ENCODE measurements at regions of chr2 and their contacts with region 1.

Region 1: GRCh38 chr2:138501425-138502283 is at the start of gene SPOPL:
- H3K4me3 Mint-ChIP-seq: peak within 1 kb of the TSS; percentile 98
- H3K27ac Mint-ChIP-seq: peak within 1 kb of the TSS; percentile 91
- H3K4me1 Mint-ChIP-seq: peaks cover 46% of the 10 kb centered on the region
- H3K27me3 Mint-ChIP-seq: no peaks in the 10 kb centered on the region

Region 2: DNA sequence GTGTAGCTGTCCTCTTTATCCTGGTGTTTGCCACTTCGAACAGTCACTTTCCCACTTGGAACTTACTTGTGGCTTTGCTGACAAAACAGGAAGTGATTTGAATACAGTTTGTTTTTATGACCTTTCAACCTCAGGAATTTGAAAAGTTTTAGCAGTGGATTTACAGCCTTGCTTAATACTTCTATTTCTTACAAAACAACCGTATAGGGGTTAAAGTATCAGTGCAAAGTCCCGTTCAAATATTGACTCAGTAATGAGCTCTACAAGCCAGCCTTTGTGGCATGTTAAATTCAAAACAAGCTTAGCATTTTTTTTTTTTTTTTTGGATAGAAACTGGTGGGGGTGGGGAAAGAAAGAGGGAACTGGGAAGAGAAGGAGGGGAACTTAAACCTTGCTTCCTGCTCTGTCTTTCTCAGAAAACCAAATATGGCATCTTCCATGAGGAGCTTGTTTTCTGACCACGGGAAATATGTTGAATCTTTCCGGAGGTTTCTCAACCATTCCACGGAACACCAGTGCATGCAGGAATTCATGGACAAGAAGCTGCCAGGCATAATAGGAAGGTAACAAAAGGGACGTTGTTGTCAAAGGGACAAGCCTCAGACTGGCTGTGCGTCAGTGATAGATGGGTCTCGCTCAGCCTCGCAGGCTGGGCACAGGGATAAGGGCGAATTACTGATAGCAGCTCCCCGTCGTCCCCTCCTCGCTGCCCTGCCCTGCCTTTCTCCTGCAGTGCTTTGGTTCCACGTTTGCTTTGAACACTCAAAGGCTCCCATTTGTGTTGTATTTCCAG is 537.4 kb before region 1 on chr2 and contains the start of gene HNMT:
- intact Hi-C with region 1: loop called (anchors 5 kb)
- H3K4me3 Mint-ChIP-seq: peak within 1 kb of the TSS; percentile 91
- H3K27ac Mint-ChIP-seq: peak within 1 kb of the TSS; percentile 96
- H3K4me1 Mint-ChIP-seq: peaks cover 65% of the 10 kb centered on the region
- H3K27me3 Mint-ChIP-seq: no peaks in the 10 kb centered on the region

Region 3: DNA sequence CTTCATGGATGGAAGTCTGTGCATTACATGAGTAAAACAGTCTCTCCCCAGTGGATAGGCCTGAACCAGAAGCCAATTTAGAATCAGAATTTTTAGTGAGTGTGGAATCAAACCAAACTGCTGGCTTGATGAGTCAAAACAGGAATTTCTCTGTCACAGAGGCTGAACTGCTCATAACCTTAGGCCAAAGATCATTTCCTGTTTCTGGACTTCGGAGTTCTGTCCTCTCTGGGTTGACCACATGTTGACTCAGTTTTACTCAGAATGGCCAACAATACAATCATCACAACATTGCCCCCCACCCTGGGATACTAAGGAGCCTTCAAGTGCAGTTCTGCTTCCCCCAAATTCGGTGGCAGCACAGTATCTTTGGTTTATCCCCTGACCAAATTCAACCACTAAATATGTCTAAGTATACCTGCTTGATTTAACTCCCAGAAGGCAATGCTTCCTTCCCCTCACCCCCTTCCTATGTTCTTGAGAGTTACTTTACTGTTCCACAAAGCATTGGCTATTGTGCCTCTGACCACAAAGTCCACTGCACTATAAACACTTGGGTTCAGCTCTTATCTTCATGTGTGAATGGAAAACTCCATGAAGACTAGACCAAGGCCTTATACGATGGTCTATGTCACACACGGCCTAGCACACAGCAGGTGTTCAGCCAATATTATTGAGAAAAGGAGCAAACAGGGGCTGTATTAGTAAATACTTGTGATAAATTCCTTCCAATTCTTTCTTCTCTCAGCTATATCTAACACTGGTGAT is 210.7 kb after region 1 on chr2:
- intact Hi-C with region 1: loop called (anchors 10 kb)
- H3K4me3 Mint-ChIP-seq: no peak overlapping the region
- H3K27ac Mint-ChIP-seq: peak overlapping the region; percentile 17
- H3K4me1 Mint-ChIP-seq: peaks cover 30% of the 10 kb centered on the region
- H3K27me3 Mint-ChIP-seq: no peaks in the 10 kb centered on the region